CD4-positive, alpha-beta memory T cell (primary cell): ENCODE measurements at regions of chr3 and their contacts with region 1.

Region 1: DNA sequence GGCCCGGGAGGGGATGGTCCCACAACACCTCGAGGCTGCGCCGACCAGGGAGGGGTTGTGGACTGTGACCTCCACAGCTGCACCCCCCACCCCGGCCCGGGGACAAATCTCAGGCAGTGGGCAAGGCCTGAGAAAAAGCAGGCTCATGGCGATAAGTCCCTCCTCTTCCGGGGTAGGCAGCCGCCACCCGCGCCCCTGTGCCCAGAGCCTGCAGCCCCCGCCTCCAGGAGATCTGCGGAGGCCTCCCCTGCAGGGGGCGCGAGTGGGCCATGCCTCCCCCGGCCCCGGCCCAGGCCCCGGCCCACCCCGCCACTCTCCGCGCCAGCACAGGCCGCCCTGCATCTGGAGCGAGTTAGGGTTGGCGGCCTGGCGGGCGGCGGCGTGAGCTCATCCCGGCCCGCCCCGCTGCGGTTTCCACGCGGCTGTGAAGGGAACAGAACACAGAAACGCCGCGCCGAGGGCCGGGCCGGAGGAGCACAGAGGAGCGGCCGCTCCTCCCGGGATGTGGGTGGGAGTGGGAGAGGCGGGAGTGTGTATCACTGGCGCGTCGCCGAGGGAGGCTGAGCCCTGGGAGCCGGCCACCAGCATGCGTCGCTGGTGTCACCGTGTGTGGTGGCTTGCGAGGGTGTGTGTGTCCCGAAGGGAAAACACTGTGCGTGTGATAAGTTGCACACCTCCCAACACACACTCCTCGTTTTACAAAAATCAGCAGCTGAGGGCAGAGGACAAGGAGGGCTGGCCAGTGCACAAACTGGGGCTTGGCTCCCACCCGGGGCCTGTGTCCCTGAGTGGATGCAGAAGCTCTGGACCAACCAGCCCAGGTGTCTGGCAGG is 17.2 kb downstream of the MYL3 start:
- DNase-seq: peak; percentile 73 to 77 (median 74)
- H3K4me3 ChIP-seq: peak overlapping the region; percentile 5 to 59
- H3K4me3 Mint-ChIP-seq: peak overlapping the region; percentile 39 to 85 (median 78)
- H3K27ac ChIP-seq: peak overlapping the region; percentile 49
- H3K27ac Mint-ChIP-seq: peak overlapping the region in 3 of 7 donors; percentile 12 to 52 (median 32)
- H3K4me1 ChIP-seq: peaks cover 15% of the 10 kb centered on the region
- H3K4me1 Mint-ChIP-seq: peaks cover 2 to 11% (median 5%) of the 10 kb centered on the region in 4 donors
- H3K27me3 ChIP-seq: no peaks in the 10 kb centered on the region
- H3K27me3 Mint-ChIP-seq: no peaks in the 10 kb centered on the region

Region 2: DNA sequence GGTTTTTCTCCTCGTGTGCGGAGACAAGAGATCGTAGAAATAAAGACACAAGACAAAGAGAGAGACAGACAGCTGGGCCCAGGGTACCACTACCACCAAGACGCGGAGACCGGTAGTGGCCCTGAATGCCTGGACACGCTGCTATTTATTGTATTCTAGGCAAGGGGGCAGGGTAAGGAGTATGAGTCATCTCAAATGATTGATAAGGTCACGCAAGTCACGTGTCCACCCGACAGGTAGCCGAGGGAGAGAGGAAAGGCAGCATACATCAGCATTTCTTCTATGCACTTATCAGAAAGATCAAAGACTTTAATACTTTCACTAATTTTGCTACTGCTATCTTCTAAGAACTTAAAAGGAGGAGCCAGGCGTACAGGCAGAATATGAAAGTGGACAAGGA is 11.0 kb before region 1 on chr3:
- CTCF ChIA-PET with region 1: interaction called, 14 read pairs
- POLR2A ChIA-PET with region 1: no interaction called
- intact Hi-C with region 1: no loop called
- DNase-seq: no peak
- H3K4me3 ChIP-seq: no peak overlapping the region
- H3K4me3 Mint-ChIP-seq: no peak overlapping the region
- H3K27ac ChIP-seq: no peak overlapping the region
- H3K27ac Mint-ChIP-seq: no peak overlapping the region
- H3K4me1 ChIP-seq: no peaks in the 10 kb centered on the region
- H3K4me1 Mint-ChIP-seq: no peaks in the 10 kb centered on the region
- H3K27me3 ChIP-seq: no peaks in the 10 kb centered on the region
- H3K27me3 Mint-ChIP-seq: peaks cover 1 to 2% of the 10 kb centered on the region in 2 donors

Region 3: DNA sequence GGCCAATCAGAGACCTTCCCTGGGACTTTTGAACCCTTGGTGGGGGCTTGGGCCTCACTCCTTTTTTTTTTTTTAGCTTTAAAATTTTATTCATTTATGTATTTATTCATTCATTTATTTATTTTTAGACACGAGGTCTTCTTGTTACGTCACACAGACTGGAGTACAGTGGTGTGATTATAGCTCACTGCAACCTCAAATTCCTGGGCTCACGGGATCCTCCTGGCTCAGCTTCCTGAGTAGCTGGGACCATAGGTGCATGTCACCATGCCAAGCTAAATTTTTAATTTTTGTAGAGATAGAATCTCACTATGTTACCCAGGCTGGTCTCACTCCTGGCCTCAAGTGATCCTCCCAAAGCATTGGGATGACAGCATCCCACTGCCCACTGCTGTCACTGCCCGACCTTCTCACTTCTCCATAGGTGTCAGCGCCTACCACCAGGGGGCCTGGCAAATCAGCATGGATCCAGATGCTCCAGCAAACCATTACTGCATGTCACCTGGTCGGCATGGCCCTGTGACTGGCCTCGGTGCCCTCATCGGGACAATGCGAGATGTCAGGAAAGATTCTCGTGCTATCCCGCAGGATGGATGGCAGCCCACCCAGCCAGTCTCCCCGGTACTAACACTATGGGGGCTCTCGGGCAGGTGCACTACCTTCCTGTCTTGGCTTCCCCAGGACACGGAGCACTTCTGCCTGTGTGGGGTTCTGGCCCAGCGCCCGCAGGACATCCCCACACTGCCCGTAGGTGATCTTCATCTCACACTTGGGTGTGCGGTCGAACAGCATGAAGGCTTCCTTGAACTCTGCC is 14.2 kb after region 1 on chr3:
- CTCF ChIA-PET with region 1: interaction called, 17 read pairs
- POLR2A ChIA-PET with region 1: no interaction called
- intact Hi-C with region 1: no loop called
- DNase-seq: no peak
- H3K4me3 ChIP-seq: no peak overlapping the region
- H3K4me3 Mint-ChIP-seq: no peak overlapping the region
- H3K27ac ChIP-seq: no peak overlapping the region
- H3K27ac Mint-ChIP-seq: no peak overlapping the region
- H3K4me1 ChIP-seq: no peaks in the 10 kb centered on the region
- H3K4me1 Mint-ChIP-seq: no peaks in the 10 kb centered on the region
- H3K27me3 ChIP-seq: no peaks in the 10 kb centered on the region
- H3K27me3 Mint-ChIP-seq: peaks cover 3 to 10% of the 10 kb centered on the region in 2 donors

Region 4: GRCh38 chr3:46895204-46895660 is 49.2 kb after region 1 on chr3:
- CTCF ChIA-PET with region 1: interaction called, 14 read pairs
- POLR2A ChIA-PET with region 1: no interaction called
- intact Hi-C with region 1: loop called (anchors 5 kb)
- DNase-seq: peak; percentile 71 to 78 (median 74)
- H3K4me3 ChIP-seq: no peak overlapping the region
- H3K4me3 Mint-ChIP-seq: peak overlapping the region in 1 of 8 donors; percentile 18
- H3K27ac ChIP-seq: no peak overlapping the region
- H3K27ac Mint-ChIP-seq: peak overlapping the region in 4 of 7 donors; percentile 0 to 66 (median 46)
- H3K4me1 ChIP-seq: peaks cover 5% of the 10 kb centered on the region
- H3K4me1 Mint-ChIP-seq: peaks cover 6 to 26% (median 15%) of the 10 kb centered on the region in 4 donors
- H3K27me3 ChIP-seq: peaks cover 3% of the 10 kb centered on the region
- H3K27me3 Mint-ChIP-seq: peaks cover 25 to 46% of the 10 kb centered on the region in 2 donors

Region 5: DNA sequence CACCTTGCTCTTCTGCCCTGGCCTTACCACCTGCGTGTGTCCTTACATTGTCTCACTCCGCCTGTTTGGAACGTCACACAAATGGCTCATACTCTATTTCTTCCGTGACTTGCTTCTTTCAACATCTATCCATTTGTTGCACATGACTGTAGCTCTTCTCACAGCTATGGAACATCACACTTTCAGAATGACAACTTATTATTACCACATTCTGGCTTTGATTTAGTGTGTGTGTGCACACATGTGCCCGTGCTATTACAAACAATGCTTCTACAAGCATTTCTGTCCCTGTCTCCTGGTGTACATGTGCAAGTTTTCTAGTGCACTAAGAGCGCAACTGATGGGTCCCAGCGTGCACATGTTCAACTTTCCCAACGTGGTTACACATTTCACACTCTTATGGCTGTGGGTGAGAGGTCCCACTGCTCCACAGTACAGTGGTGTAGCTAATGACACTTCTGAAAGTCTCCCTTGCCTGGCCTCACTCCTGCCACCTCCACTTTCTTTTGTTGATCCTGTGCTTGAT is 69.4 kb after region 1 on chr3:
- CTCF ChIA-PET with region 1: no interaction called
- POLR2A ChIA-PET with region 1: no interaction called
- intact Hi-C with region 1: no loop called
- DNase-seq: peak in 1 of 5 donors; percentile 7
- H3K4me3 ChIP-seq: no peak overlapping the region
- H3K4me3 Mint-ChIP-seq: peak overlapping the region in 1 of 8 donors; percentile 13
- H3K27ac ChIP-seq: no peak overlapping the region
- H3K27ac Mint-ChIP-seq: peak overlapping the region in 3 of 7 donors; percentile 0 to 70 (median 62)
- H3K4me1 ChIP-seq: peaks cover 17% of the 10 kb centered on the region
- H3K4me1 Mint-ChIP-seq: peaks cover 12 to 19% (median 16%) of the 10 kb centered on the region in 4 donors
- H3K27me3 ChIP-seq: no peaks in the 10 kb centered on the region
- H3K27me3 Mint-ChIP-seq: no peaks in the 10 kb centered on the region